Right lobe of liver (tissue), 6 donors: ENCODE measurements at regions of chr10 and their contacts with region 1.

Region 1: GRCh38 chr10:12466704-12467305 is 117.5 kb downstream of the CAMK1D start:
- DNase-seq: no peak
- ATAC-seq: no peak
- H3K4me3 ChIP-seq: no peak overlapping the region
- H3K27ac ChIP-seq: no peak overlapping the region
- H3K4me1 ChIP-seq: peaks cover 0 to 24% (median 5%) of the 10 kb centered on the region in 4 donors
- H3K27me3 ChIP-seq: no peaks in the 10 kb centered on the region
- CTCF ChIP-seq: no peak
- POLR2A ChIP-seq: no peak

Region 2: DNA sequence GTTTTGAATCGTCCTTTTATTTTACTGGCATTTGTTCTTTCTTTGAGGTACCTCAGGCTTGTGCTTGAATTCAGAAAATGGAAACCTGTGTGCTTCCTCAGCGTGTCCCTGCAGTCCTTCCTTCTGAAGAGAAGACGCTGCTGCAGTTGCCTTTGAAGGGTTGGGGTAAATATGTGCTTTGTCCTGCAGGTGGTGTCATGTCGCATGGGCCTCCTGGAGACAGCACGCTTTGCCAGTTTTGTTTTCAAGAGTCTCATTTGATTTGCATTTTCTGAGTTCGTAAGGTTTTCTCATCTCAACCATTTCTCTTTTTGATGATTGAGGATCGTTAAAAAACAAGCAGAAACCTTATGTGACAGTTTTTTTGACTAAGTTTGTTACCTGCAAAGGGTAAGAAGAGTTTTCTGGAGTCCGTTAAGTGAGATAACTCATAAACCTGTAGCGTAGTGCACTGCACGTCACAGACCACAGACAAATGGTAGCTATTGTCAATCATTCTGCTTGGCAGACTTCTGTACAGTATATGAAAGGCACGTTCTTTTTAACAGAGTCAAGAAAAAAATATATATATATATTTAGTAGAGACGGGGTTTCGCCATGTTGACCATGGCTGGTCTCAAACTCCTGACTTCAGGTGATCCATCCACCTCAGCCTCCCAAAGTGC is 213.8 kb before region 1 on chr10:
- intact Hi-C with region 1: loop called in 1 of 2 experiments (anchors 10 kb)
- DNase-seq: peak in 1 of 3 donors; percentile 4
- ATAC-seq: peak; percentile 29 to 44 (median 35)
- H3K4me3 ChIP-seq: no peak overlapping the region
- H3K27ac ChIP-seq: no peak overlapping the region
- H3K4me1 ChIP-seq: no peaks in the 10 kb centered on the region
- H3K27me3 ChIP-seq: no peaks in the 10 kb centered on the region
- CTCF ChIP-seq: peak in 3 of 4 donors; percentile 4 to 31 (median 20)
- POLR2A ChIP-seq: no peak

Region 3: GRCh38 chr10:12389154-12389734 is 77.6 kb before region 1 on chr10:
- intact Hi-C with region 1: no loop called
- DNase-seq: peak in 2 of 3 donors; percentile 48 to 71
- ATAC-seq: peak; percentile 67 to 85 (median 79)
- H3K4me3 ChIP-seq: no peak overlapping the region
- H3K27ac ChIP-seq: no peak overlapping the region
- H3K4me1 ChIP-seq: peaks cover 0 to 3% (median 0%) of the 10 kb centered on the region in 4 donors
- H3K27me3 ChIP-seq: no peaks in the 10 kb centered on the region
- CTCF ChIP-seq: no peak
- POLR2A ChIP-seq: no peak